Ovary (tissue), 10 donors: ENCODE measurements at regions of chr12 and their contacts with region 1.

Region 1: DNA sequence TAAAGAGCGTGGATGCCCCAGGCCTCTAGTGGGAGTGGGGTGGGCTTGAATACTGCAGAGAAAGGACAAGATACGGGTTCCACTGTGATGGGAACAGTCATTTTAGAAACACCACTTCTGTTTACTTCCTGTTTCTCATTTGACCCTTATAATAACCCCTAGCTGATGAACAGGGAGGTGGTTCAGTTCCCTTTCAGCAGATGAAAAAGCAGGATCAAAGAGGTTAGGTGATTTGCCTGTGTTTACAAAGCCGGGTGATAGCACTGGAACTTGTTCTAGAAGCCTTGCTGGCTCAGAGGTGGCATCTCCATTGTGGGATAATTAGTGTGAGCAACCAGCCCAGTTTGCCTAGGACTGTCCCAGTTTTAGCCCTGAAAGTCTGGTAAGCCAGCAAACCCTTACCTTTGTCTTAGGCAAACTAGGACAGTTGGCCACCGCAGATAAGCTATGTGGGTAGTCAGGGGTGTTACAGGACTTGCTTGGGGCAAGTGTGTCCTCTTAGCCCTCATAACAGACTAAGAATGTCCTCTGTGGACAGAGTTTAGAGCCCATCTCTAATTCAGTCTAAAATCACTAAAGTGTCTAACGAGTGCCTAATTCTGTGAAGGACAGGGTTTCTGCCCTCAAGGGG is 7.5 kb upstream of the LRP1-AS start:
- DNase-seq: no peak
- H3K4me3 ChIP-seq: no peak overlapping the region
- H3K27ac ChIP-seq: peak overlapping the region in 1 of 2 donors; percentile 6
- H3K4me1 ChIP-seq: peaks cover 29% of the 10 kb centered on the region
- H3K27me3 ChIP-seq: no peaks in the 10 kb centered on the region
- CTCF ChIP-seq: no peak
- EP300 ChIP-seq: no peak
- POLR2A ChIP-seq: no peak

Region 2: GRCh38 chr12:57166971-57167371 is 12.1 kb after region 1 on chr12:
- intact Hi-C with region 1: loop called in 1 of 4 experiments (anchors 2 kb)
- DNase-seq: peak in 1 of 5 donors; percentile 32
- H3K4me3 ChIP-seq: no peak overlapping the region
- H3K27ac ChIP-seq: peak overlapping the region in 1 of 2 donors; percentile 21
- H3K4me1 ChIP-seq: peaks cover 6% of the 10 kb centered on the region
- H3K27me3 ChIP-seq: no peaks in the 10 kb centered on the region
- CTCF ChIP-seq: no peak
- EP300 ChIP-seq: no peak
- POLR2A ChIP-seq: no peak